ENCODE measurements at regions of chr6 and their contacts with region 1.

Region 1: DNA sequence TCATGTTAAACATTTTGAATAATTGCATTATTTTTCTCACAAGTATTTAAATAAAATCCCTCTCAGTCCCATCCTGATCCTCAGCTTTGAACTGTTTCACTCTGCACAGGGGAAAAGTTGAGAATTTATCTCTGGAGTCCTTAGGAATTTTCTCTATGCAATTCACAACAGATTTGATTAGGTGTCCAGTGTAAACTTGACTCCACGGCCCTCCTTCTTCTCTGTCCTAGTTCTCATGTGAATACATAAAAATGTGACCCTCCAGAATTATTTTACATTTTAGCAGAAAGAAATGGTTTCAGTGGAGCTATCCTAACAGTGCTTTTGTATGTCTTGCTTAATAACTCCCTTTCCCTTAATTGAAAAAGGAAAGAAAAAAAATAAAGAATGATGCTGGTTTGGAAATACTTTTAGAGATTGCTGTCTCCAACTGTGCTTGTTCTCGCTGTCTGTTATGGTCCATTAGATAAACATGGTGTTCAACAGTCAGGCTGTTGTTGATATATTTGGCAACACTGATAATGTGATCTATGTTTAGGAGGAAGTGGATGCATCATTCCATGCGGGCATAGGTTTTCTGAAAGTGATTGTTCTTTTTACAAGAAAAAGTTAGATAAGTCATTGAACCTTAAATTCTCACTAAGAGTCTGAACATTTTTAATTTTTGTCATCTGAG is 599.4 kb upstream of the CITED2 start:
- DNase-seq: peak in 2 of 4 experiments; percentile 40 to 73
- ATAC-seq: peak; percentile 92
- H3K4me3 ChIP-seq: no peak overlapping the region
- H3K27ac ChIP-seq: peak overlapping the region; percentile 45; the same call in 2 of the 3 replicates
- H3K4me1 ChIP-seq: peaks cover 0 to 9% of the 10 kb centered on the region in 2 experiments; a peak in 2 of 5 replicates
- H3K27me3 ChIP-seq: no peaks in the 10 kb centered on the region
- CTCF ChIP-seq: no peak
- EP300 ChIP-seq: peak; percentile 90
- POLR2A ChIP-seq: no peak
- RAD21 ChIP-seq: no peak

Region 2: GRCh38 chr6:139852488-139853140 is 121.2 kb before region 1 on chr6:
- CTCF ChIA-PET with region 1: no interaction called
- POLR2A ChIA-PET with region 1: no interaction called
- in situ Hi-C with region 1: no loop called
- intact Hi-C with region 1: no loop called
- DNase-seq: no peak
- ATAC-seq: peak; percentile 41; the same call in 1 of the 3 replicates
- H3K4me3 ChIP-seq: no peak overlapping the region
- H3K27ac ChIP-seq: no peak overlapping the region
- H3K4me1 ChIP-seq: no peaks in the 10 kb centered on the region
- H3K27me3 ChIP-seq: no peaks in the 10 kb centered on the region
- CTCF ChIP-seq: no peak
- EP300 ChIP-seq: no peak
- POLR2A ChIP-seq: no peak
- RAD21 ChIP-seq: no peak

Region 3: GRCh38 chr6:139939189-139939979 is 34.4 kb before region 1 on chr6:
- CTCF ChIA-PET with region 1: no interaction called
- POLR2A ChIA-PET with region 1: no interaction called
- in situ Hi-C with region 1: no loop called
- intact Hi-C with region 1: loop called (anchors 5 kb)
- DNase-seq: peak in 2 of 4 experiments; percentile 31 to 42
- ATAC-seq: peak; percentile 46; the same call in 1 of the 3 replicates
- H3K4me3 ChIP-seq: no peak overlapping the region
- H3K27ac ChIP-seq: no peak overlapping the region
- H3K4me1 ChIP-seq: peaks cover 0 to 23% of the 10 kb centered on the region in 2 experiments; a peak in 2 of 5 replicates
- H3K27me3 ChIP-seq: no peaks in the 10 kb centered on the region
- CTCF ChIP-seq: no peak
- EP300 ChIP-seq: no peak
- POLR2A ChIP-seq: no peak
- RAD21 ChIP-seq: no peak